Activated B cell treated with CpG ODN at 0.5 μM for 24 hours (primary cell): ENCODE measurements at regions of chr6 and their contacts with region 1.

Region 1: GRCh38 chr6:90285611-90286381 is 10.8 kb downstream of the BACH2 start:
- DNase-seq: no peak
- ATAC-seq: peak; percentile 67
- H3K4me3 Mint-ChIP-seq: peak overlapping the region; percentile 77
- H3K27ac Mint-ChIP-seq: peak overlapping the region; percentile 88
- H3K4me1 Mint-ChIP-seq: peaks cover 92% of the 10 kb centered on the region
- H3K27me3 Mint-ChIP-seq: no peaks in the 10 kb centered on the region
- CTCF ChIP-seq: no peak

Region 2: DNA sequence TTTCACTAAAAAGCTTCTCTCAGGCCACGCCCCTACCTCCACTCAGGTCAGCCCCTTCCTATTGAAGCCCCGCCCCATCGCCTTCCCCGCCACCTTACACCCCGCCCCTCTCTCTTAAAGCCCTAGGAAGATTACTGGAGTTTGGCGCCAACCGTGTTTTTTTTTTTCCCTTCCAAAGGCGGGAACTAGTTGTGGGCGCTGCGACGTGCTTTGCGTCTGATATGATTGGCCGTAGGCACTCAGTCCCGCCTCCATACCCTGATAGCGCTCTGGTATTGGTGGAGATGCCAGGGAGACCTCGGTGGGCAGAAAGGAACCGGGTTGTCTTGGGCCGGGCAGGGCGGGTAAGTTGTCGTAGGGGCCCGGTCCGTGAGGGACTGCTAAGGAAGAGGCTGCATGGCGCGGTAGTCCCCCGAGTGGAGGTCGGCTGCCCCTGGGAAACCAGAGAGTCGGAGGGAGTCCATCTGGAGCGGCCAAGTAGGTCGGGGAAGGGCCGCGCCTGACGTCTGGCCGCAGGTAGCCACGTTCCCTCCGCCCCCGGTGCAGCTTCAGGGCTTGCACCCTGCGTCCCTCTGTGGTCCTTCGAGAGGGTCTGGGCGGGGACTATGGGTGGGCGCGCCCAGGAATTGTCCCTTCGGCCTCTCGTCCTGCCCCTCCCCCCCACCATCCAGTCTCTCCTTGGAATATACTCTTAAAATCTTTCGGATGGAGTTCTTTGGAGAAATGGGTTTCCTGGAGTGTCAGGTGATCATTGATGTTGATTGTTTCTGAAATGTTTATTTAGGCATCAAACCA is 456.0 kb before region 1 on chr6 and contains the start of gene CASP8AP2:
- CTCF ChIA-PET with region 1: no interaction called
- POLR2A ChIA-PET with region 1: interaction called, 3 read pairs
- intact Hi-C with region 1: loop called (anchors 2 kb)
- DNase-seq: peak; percentile 76
- ATAC-seq: peak; percentile 93
- H3K4me3 Mint-ChIP-seq: peak within 1 kb of the TSS; percentile 99
- H3K27ac Mint-ChIP-seq: peak within 1 kb of the TSS; percentile 96
- H3K4me1 Mint-ChIP-seq: peaks cover 37% of the 10 kb centered on the region
- H3K27me3 Mint-ChIP-seq: no peaks in the 10 kb centered on the region
- CTCF ChIP-seq: no peak
- total RNA-seq, gene CASP8AP2: 17.1 and 17.8 TPM in 2 replicates

Region 3: DNA sequence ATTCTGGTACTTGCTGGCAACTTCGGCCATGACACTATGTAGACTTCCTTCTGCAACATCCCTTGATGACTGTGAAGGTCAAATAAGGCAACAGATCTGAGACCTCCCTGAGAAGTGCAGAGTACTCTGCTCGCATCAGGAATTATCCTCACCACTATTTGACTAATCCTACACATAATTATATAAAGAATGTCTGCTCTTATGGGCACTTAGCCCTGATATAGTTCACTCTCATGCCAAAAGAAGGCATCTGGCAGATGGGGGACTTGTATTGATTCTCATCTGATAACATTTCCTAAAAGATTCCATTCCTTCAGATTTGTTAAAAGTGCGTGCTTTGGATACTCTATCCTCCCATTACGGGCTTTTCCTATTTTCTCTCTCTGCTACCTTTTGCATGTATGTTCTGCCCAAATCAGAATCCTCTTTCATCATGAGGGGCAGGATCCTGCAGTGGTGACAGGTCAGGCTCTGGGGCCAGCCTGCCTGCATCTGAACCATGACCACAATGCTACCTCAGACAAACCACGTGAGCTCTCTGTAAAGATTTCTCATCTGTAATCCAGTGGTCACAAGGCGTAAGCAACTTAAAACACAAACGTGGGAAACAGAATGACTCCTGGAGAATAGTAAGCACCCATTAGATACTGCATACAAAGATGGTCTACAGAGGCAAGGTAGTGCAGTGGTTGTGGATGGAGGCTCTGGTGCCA is 257.6 kb before region 1 on chr6:
- CTCF ChIA-PET with region 1: no interaction called
- POLR2A ChIA-PET with region 1: no interaction called
- intact Hi-C with region 1: no loop called
- DNase-seq: no peak
- ATAC-seq: no peak
- H3K4me3 Mint-ChIP-seq: no peak overlapping the region
- H3K27ac Mint-ChIP-seq: peak overlapping the region; percentile 59
- H3K4me1 Mint-ChIP-seq: peaks cover 68% of the 10 kb centered on the region
- H3K27me3 Mint-ChIP-seq: no peaks in the 10 kb centered on the region
- CTCF ChIP-seq: no peak

Region 4: GRCh38 chr6:90045535-90045934 is 240.3 kb before region 1 on chr6:
- CTCF ChIA-PET with region 1: no interaction called
- POLR2A ChIA-PET with region 1: no interaction called
- intact Hi-C with region 1: no loop called
- DNase-seq: no peak
- ATAC-seq: no peak
- H3K4me3 Mint-ChIP-seq: no peak overlapping the region
- H3K27ac Mint-ChIP-seq: peak overlapping the region; percentile 55
- H3K4me1 Mint-ChIP-seq: peaks cover 21% of the 10 kb centered on the region
- H3K27me3 Mint-ChIP-seq: no peaks in the 10 kb centered on the region
- CTCF ChIP-seq: no peak

Region 5: GRCh38 chr6:90103056-90103800 is 182.6 kb before region 1 on chr6:
- CTCF ChIA-PET with region 1: no interaction called
- POLR2A ChIA-PET with region 1: no interaction called
- intact Hi-C with region 1: loop called (anchors 1 kb)
- DNase-seq: no peak
- ATAC-seq: peak; percentile 47
- H3K4me3 Mint-ChIP-seq: peak overlapping the region; percentile 78
- H3K27ac Mint-ChIP-seq: peak overlapping the region; percentile 74
- H3K4me1 Mint-ChIP-seq: peaks cover 97% of the 10 kb centered on the region
- H3K27me3 Mint-ChIP-seq: no peaks in the 10 kb centered on the region
- CTCF ChIP-seq: no peak

Region 6: GRCh38 chr6:90184334-90185298 is 101.2 kb before region 1 on chr6:
- CTCF ChIA-PET with region 1: no interaction called
- POLR2A ChIA-PET with region 1: interaction called, 10 read pairs
- intact Hi-C with region 1: loop called (anchors 10 kb)
- DNase-seq: no peak
- ATAC-seq: peak; percentile 26
- H3K4me3 Mint-ChIP-seq: peak overlapping the region; percentile 69
- H3K27ac Mint-ChIP-seq: peak overlapping the region; percentile 89
- H3K4me1 Mint-ChIP-seq: peaks cover 70% of the 10 kb centered on the region
- H3K27me3 Mint-ChIP-seq: no peaks in the 10 kb centered on the region
- CTCF ChIP-seq: no peak

Region 7: GRCh38 chr6:90296346-90297114 is 10.7 kb after region 1 on chr6 and contains the start of gene BACH2:
- CTCF ChIA-PET with region 1: interaction called, 9 read pairs
- POLR2A ChIA-PET with region 1: interaction called, 99 read pairs
- intact Hi-C with region 1: loop called (anchors 1 kb)
- DNase-seq: peak; percentile 85
- ATAC-seq: peak; percentile 76
- H3K4me3 Mint-ChIP-seq: peak within 1 kb of the TSS; percentile 89
- H3K27ac Mint-ChIP-seq: peak within 1 kb of the TSS; percentile 89
- H3K4me1 Mint-ChIP-seq: peaks cover 55% of the 10 kb centered on the region
- H3K27me3 Mint-ChIP-seq: no peaks in the 10 kb centered on the region
- CTCF ChIP-seq: no peak
- total RNA-seq, gene BACH2: 79.6 and 90.4 TPM in 2 replicates

Region 8: GRCh38 chr6:90393232-90393884 is 107.6 kb after region 1 on chr6:
- CTCF ChIA-PET with region 1: interaction called, 66 read pairs
- POLR2A ChIA-PET with region 1: interaction called, 6 read pairs
- intact Hi-C with region 1: loop called (anchors 1 kb)
- DNase-seq: peak; percentile 47
- ATAC-seq: peak; percentile 53
- H3K4me3 Mint-ChIP-seq: peak overlapping the region; percentile 28
- H3K27ac Mint-ChIP-seq: peak overlapping the region; percentile 59
- H3K4me1 Mint-ChIP-seq: peaks cover 45% of the 10 kb centered on the region
- H3K27me3 Mint-ChIP-seq: no peaks in the 10 kb centered on the region
- CTCF ChIP-seq: peak; percentile 67